ENCODE measurements at regions of chr6 and their contacts with region 1.

Region 1: DNA sequence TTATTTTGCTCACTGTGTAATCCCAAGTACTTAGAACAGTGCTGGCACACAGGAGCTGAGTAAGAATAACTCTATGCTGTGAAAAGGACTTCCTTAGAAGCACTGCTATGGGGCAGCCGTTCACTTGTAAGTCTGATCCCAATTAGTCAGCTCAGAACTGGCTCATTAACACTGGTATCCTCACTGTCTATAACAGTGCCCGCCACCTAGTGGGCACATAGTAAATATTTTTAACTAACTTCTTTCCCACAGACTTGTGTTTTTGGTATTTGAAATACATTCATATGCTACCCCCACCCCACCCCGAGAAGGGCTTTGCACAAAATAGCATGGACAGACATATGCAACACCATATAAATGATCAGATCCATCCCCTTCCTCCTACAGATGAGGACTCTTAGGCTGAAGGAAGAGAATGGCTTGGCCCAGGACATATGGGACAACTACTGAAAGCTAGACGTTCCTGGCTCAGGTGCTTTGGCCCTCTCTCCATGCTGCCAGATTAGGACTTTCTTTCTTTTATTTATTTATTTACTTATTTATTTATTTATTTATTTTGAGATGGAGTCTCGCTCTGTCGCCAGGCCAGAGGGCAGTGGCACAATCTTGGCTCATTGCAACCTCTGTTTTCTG is 47.1 kb downstream of the DST start:
- DNase-seq: peak; percentile 74
- H3K4me3 Mint-ChIP-seq: no peak overlapping the region
- H3K27ac Mint-ChIP-seq: peak overlapping the region; percentile 38
- H3K4me1 Mint-ChIP-seq: peaks cover 33% of the 10 kb centered on the region
- H3K27me3 Mint-ChIP-seq: peaks cover 8% of the 10 kb centered on the region

Region 2: DNA sequence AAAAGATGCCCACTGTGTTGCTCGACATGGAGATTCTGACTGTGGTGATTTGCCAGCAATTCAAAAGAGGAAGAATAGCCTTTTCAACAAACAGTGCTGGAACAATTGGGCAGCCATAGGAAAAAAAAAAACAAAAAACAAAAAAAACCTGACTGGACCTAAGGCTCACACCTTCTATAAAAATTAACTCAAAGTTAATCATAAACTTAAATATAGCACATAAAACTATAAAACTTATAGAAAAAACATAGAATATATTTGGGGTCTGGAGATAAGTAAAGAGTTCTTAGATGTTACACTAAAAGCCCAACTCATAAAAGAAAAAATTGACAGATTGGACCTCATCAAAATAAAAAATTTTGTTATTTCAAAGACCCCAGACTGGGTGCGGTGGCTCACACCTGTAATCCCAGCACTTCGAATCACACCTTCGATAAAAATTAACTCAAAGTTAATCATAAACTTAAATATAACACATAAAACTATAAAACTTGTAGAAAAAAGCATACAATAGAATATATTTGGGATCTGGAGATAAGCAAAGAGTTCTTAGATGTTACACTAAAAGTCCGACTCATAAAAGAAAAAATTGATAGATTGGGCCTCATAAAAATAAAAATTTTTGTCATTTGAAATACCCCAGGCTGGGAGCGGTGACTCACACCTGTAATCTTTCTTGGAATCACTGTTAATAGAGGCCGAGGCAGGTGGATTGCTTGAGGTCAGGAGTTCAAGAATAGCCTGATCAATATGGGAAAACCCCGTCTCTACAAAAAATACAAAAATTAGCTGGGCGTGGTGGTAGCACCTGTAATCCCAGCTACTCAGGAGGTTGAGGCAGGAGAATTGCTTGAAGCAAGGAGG is 1864.6 kb before region 1 on chr6:
- CTCF ChIA-PET with region 1: no interaction called
- intact Hi-C with region 1: no loop called
- DNase-seq: no peak
- H3K4me3 Mint-ChIP-seq: no peak overlapping the region
- H3K27ac Mint-ChIP-seq: no peak overlapping the region
- H3K4me1 Mint-ChIP-seq: no peaks in the 10 kb centered on the region
- H3K27me3 Mint-ChIP-seq: no peaks in the 10 kb centered on the region

Region 3: DNA sequence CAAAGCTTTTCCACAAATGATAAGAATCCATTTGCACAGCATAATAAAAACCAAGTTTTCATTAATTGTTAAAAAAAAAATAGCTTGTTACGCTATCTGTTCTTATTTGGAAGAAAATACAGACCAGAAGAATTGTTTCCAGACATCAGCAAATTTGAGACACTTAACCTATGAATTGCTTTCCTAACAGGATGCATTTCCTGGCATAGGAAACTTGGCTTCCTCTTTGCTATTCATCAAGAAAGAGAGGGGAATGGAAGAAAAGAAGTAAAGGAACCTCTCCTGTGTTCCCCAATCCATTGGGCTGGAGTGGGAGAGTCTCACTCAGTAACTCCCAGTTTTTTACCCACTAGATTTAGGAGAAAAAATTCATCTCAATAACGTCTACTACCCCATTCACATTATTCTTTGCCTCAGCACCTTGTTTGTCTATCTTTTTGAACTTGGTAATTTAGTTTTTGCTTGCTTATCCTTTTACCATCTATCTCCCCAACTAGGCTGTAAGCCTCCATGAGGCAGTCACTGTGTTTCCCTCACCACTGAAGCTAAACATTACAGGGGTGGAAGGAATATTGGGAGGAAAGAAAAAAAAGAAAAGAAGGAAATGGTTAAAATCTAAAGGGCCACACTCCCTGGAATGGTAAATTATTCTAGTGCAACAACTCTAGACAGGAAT is 498.5 kb before region 1 on chr6:
- CTCF ChIA-PET with region 1: no interaction called
- intact Hi-C with region 1: loop called (anchors 5 kb)
- DNase-seq: no peak
- H3K4me3 Mint-ChIP-seq: no peak overlapping the region
- H3K27ac Mint-ChIP-seq: no peak overlapping the region
- H3K4me1 Mint-ChIP-seq: no peaks in the 10 kb centered on the region
- H3K27me3 Mint-ChIP-seq: no peaks in the 10 kb centered on the region

Region 4: DNA sequence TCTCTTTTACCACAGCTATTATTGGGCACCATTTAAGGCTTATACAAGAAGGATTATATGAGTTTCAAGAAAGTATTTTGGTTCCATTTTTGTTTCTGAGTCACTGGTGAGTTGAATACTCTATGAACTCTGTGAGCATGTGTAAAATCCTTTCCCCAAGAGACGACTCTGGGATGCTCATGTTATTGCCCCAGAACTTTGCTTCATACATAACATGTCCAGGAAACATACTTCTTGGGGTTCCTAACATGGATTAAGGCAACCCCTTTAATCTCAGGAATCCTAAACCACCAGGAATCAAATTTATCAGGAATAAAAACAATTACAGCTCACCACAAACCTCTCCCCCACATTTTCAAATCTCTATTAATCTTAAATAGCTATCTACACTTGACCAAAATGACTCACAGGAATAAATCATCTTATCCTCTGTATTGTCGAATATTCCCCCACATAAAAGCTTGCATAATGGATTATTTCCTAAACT is 230.7 kb before region 1 on chr6:
- CTCF ChIA-PET with region 1: interaction called, 35 read pairs
- intact Hi-C with region 1: no loop called
- DNase-seq: no peak
- H3K4me3 Mint-ChIP-seq: no peak overlapping the region
- H3K27ac Mint-ChIP-seq: no peak overlapping the region
- H3K4me1 Mint-ChIP-seq: peaks cover 3% of the 10 kb centered on the region
- H3K27me3 Mint-ChIP-seq: peaks cover 4% of the 10 kb centered on the region

Region 5: DNA sequence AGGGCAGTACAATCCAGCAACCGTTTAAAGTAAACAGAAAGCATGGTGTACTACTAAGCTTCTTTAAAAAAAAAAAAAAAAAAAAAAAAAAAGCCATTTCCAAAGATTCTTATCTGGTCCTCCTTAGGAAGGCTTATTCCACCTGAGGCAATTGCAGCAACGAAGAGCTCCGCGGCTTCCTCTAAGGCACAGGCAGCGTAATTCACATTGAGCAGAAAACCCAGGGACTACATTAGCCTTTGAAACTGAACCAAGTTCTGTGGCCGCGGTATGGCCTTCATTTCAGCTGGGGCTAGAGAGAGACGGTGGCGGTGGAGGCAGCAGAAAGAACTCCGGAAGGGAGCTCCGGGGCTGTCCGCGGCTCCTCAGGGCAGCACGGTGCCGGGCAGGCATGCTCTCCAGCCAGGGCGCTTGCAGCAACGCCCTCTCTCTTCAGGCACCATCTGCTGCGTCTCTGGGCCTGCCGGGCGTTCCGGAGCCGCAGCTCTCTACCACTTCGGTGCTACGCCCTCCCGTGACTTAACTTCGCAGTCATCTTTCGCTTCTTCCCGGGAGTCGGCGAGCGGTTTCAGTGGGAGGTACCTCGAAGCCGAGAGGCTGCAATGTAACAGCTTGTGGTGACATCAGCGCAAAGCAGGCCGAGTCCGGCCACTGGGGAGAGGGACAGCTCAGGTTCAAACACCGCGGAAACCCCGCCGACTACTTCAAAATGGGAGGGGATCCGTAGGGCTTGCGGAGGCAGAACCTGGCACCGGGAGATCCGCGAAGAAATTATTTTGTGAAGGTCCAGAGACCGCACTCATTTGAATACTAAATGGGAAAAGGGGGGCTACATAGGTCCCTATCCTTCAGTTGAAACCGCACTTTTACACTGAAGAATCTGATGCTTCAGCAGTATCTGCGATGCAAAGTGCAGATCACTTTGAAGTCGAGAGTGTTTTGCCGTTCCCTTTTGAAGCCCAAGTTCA is 53.0 kb before region 1 on chr6:
- CTCF ChIA-PET with region 1: interaction called, 27 read pairs
- intact Hi-C with region 1: loop called (anchors 1 kb)
- DNase-seq: peak; percentile 87
- H3K4me3 Mint-ChIP-seq: no peak overlapping the region
- H3K27ac Mint-ChIP-seq: no peak overlapping the region
- H3K4me1 Mint-ChIP-seq: no peaks in the 10 kb centered on the region
- H3K27me3 Mint-ChIP-seq: no peaks in the 10 kb centered on the region

Region 6: GRCh38 chr6:56851541-56852259 is 256.1 kb after region 1 on chr6:
- CTCF ChIA-PET with region 1: interaction called, 7 read pairs
- intact Hi-C with region 1: loop called (anchors 1 kb)
- DNase-seq: peak; percentile 43
- H3K4me3 Mint-ChIP-seq: peak overlapping the region; percentile 67
- H3K27ac Mint-ChIP-seq: no peak overlapping the region
- H3K4me1 Mint-ChIP-seq: peaks cover 21% of the 10 kb centered on the region
- H3K27me3 Mint-ChIP-seq: peaks cover 38% of the 10 kb centered on the region